ENCODE measurements at regions of chr12 and their contacts with region 1.

Region 1: DNA sequence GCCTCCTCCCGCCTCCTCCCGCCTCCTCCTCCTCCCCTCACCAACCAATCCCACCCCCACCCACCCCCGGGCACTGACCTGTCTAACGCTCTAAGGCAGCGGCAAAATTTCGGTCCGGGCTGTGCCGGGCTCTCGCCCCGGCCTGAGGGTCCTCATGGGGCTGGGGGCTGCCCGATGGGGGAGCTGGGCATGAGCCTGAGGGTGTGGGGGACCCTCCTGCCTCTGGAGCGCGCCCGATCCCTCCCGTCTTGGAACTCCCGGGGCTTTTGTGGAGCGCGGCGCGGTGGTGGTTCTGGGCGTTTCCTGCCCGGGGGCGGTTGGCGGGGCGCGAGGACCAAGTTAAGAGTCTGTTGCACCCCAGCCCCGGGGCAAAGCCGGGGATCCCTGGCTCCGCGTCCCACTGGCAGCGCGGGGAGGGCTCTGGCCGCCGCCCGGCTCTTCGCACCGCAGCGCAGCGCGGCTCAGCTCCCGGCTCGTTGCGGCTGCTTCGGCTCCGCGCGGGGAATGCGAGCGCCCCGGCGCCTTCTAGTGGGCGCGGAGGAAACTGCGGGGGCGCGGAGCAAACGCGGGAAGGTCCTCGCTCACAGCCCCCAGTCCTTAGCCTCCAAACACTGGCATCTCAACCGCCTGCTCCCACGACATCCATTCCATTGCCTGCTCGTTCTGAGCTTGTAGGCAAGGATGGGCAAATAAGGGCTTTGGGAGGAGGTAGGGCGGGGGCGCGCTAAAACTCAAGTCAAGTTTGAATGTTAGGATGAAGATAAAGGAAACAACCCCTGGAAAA is at the start of gene B4GALNT1:
- DNase-seq: peak; percentile 69
- H3K27ac ChIP-seq: peak within 1 kb of the TSS; percentile 44
- CTCF ChIP-seq: peak; percentile 96

Region 2: DNA sequence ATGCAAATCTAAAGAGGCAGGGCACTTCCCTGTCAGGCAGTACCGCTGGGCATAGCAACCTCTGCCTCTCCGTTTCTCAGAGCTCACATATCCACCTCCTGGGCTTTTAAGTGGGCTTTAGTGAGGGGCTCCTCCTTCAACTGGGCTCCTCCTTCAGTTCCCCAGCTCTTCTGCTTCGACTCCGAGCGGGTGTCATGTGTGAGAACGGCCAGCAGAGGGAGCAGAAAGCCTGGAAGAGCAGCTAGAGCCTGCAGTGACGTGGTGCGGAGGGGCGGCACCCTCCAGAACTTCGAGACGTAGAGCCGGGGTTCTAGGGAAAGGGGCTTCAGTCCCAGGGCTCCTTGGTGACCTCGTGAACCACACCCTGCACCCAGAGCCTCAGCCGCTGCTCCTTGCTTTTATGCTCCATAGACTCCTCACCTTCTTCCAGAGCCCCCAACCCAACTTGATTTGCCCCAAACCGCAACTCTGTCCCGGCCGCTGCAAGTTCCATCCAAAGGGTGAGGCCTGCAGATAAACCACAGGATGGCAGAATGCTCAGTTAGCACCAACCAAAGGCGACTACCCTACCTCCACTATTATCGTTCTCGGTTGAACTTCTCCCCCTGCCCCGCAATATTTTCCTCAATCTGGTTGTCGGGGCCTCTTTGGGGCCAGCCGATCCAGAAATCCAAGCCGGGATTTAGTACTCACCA is 173.7 kb before region 1 on chr12:
- CTCF ChIA-PET with region 1: no interaction called
- POLR2A ChIA-PET with region 1: no interaction called
- DNase-seq: peak; percentile 81
- H3K27ac ChIP-seq: peak overlapping the region; percentile 97
- CTCF ChIP-seq: peak; percentile 93

Region 3: GRCh38 chr12:57590536-57591479 is 42.1 kb before region 1 on chr12 and contains the start of gene PIP4K2C:
- CTCF ChIA-PET with region 1: interaction called, 13 read pairs
- POLR2A ChIA-PET with region 1: no interaction called
- DNase-seq: peak; percentile 86
- H3K27ac ChIP-seq: peak within 1 kb of the TSS; percentile 65
- CTCF ChIP-seq: no peak

Region 4: GRCh38 chr12:57621497-57622292 is 11.2 kb before region 1 on chr12:
- CTCF ChIA-PET with region 1: interaction called, 17 read pairs
- POLR2A ChIA-PET with region 1: no interaction called
- DNase-seq: peak; percentile 61
- H3K27ac ChIP-seq: no peak overlapping the region
- CTCF ChIP-seq: peak; percentile 93

Region 5: GRCh38 chr12:57751788-57752667 is 119.1 kb after region 1 on chr12 and contains the start of gene CDK4:
- CTCF ChIA-PET with region 1: no interaction called
- POLR2A ChIA-PET with region 1: no interaction called
- DNase-seq: peak; percentile 98
- H3K27ac ChIP-seq: peak within 1 kb of the TSS; percentile 81
- CTCF ChIP-seq: no peak